Dendritic cell treated with granulocyte-macrophage colony-stimulating factor and Interleukin-4, amounts not matched to agents 40 ng/mL and 50 ng/mL, for 4 days (primary cell): ENCODE measurements at regions of chr2 and their contacts with region 1.

Region 1: DNA sequence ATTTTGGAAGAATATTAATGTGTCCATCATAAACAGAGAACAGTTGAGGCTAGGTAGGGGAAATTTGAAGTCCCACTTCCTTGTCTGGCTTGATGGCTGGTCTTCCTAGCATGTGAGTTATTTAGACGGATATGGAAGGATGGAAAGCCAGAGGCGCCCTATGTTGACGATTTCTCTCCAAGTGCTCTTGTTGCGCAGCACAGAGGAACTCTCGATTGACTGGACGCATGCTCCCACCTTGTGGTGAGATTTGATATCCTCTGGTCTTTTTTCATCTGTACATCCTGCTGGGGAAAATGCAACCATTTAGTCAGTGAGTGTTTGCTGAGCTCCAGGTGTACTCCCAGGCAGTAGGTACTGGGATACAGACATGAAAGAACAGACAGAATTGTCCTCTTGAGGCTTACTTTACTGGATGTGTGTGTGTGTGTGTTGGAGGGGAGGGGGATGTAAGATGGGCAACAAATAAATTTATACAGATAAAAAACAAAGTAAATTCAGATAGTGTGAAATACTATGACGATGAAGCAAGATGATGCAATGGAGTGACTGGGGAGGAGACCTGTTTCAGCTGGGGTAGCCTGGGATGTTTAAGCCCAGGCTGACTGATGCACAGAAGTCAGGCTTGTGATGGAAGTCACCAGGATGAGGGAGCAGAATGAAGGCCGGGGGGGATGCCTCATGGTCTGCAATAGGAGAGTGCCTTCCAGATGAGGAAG is 137.2 kb downstream of the TRIM43 start:
- H3K4me3 Mint-ChIP-seq: no peak overlapping the region
- H3K27ac Mint-ChIP-seq: no peak overlapping the region
- H3K4me1 Mint-ChIP-seq: peaks cover 5% of the 10 kb centered on the region
- H3K27me3 Mint-ChIP-seq: peaks cover 17% of the 10 kb centered on the region

Region 2: GRCh38 chr2:95231723-95232122 is 497.3 kb before region 1 on chr2:
- intact Hi-C with region 1: loop called (anchors 2 kb)
- H3K4me3 Mint-ChIP-seq: no peak overlapping the region
- H3K27ac Mint-ChIP-seq: no peak overlapping the region
- H3K4me1 Mint-ChIP-seq: peaks cover 5% of the 10 kb centered on the region
- H3K27me3 Mint-ChIP-seq: no peaks in the 10 kb centered on the region

Region 3: DNA sequence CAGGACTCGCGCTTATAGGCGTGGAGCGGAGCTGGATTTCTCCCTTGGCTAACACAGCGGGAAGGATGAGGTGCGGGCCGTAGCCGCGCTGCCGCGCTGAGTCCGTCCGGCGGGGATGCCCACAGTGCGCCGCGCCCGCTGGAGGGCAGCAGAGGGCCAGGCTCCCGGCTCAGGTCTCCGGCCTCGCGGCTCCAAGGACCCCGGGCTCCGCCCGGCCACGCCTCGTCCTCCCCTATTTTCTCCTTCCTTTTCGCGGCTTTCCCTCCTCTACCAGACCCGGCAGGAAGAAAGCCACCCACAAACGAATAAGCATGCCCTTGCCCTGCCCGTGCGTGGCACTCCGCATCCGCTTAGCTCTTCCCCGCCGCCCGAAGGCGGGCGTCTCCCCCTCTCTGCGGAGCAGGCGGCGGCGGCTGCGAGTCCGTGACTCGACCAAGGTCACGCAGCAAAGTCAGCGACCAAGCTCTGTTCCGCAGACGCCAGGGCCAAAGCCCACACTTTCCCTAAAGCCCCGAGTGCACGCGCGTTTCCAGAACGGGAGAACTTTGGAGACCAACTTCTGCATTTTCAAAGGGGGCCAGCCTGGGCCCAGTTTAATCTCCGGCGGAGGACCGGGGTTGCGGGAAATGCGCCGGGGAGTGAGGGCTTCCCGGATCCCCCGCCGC is 383.3 kb before region 1 on chr2:
- intact Hi-C with region 1: loop called (anchors 5 kb)
- H3K4me3 Mint-ChIP-seq: peak overlapping the region; percentile 79
- H3K27ac Mint-ChIP-seq: peak overlapping the region; percentile 32
- H3K4me1 Mint-ChIP-seq: peaks cover 9% of the 10 kb centered on the region
- H3K27me3 Mint-ChIP-seq: peaks cover 58% of the 10 kb centered on the region

Region 4: DNA sequence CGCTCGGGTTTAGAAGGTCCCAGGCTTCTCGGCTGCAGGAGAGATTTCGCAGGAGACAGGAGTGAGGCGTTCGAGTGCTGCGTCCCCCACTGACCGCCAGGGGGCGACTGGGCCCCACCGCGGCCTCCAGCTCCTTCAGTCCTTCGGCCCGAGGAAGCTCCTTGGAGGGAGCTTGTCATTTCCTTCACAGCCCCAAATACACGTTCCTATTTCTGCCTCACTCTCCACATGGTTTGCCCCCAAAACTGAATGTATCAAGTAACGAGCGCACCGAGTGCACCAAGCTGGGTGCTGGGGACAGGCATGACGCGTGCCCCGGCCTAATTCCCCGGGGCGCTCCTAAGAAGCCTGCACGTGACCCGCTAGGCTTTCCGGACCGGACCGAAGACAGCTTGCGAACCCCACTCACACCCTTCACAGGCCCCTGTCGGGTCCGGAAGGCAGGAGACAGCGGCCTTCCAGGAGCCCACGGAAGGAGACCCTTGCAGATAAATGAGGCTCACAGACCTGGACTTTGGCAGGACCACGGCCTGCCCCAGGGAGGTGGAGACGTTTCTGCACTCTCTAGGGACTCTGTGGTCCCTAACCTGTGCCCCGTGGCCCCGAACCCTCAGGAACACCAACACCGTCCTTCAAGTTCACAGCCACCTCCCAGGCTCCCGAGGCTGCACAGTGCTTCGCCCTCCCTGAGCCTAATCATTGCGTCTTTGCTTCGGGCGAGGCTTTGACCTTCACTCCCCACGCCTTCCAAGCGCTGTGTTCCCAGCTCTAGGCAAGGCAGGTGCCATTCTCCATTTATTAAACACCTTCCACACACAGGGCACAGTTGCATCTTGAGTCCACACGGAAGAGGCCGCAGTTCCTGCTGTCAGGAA is 339.6 kb before region 1 on chr2:
- intact Hi-C with region 1: loop called (anchors 2 kb)
- H3K4me3 Mint-ChIP-seq: no peak overlapping the region
- H3K27ac Mint-ChIP-seq: no peak overlapping the region
- H3K4me1 Mint-ChIP-seq: peaks cover 5% of the 10 kb centered on the region
- H3K27me3 Mint-ChIP-seq: peaks cover 2% of the 10 kb centered on the region

Region 5: DNA sequence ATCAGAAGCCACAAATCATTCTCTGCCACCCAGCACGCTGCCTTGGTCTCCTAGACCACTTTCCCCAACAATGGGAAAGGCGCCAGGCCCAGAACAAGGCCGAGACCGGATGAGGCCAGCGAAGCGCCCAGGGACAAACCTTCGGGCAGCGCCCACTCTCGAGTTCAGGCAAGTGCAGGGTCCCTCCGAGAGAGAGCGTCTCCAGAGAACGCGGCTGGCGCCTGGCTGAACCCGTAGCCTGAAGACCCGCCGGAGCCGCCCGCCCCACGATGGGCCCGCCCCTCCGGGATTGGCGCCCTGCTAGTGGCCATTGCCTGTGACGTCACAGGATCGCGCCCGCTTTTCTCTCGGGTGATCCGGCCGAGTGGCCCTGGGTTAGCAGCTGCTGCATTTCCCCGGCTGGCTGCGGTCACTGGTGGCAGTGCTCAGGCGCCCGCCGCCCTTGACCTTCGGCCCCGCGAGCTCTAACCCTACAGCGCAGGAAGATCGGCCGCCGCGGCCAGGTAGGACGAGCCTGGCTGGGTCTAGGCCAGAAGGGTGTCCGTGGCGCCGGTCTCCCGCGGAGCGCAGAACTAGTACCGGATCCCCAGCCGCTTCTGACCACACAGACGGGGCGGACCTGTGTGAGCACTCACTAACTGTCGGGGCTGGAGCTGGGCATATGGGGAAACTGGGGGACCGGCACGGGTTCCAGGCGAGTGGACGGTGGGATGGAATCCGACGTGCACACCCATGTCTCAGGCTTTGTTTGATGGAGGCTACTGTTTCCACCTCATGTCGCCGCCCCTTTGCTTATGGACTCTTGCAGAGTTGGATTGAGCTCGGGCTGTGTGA is 326.4 kb before region 1 on chr2 and contains the start of gene FAHD2A:
- intact Hi-C with region 1: loop called (anchors 5 kb)
- H3K4me3 Mint-ChIP-seq: peak within 1 kb of the TSS; percentile 87
- H3K27ac Mint-ChIP-seq: peak within 1 kb of the TSS; percentile 94
- H3K4me1 Mint-ChIP-seq: peaks cover 17% of the 10 kb centered on the region
- H3K27me3 Mint-ChIP-seq: peaks cover 4% of the 10 kb centered on the region